ENCODE measurements at regions of chr3 and their contacts with region 1.

Region 1: GRCh38 chr3:30199096-30199759 is 407.2 kb upstream of the TGFBR2 start:
- DNase-seq: peak; percentile 76
- H3K4me3 Mint-ChIP-seq: no peak overlapping the region
- H3K27ac Mint-ChIP-seq: peak overlapping the region; percentile 12
- H3K4me1 Mint-ChIP-seq: peaks cover 32% of the 10 kb centered on the region
- H3K27me3 Mint-ChIP-seq: no peaks in the 10 kb centered on the region
- CTCF ChIP-seq: peak; percentile 60

Region 2: GRCh38 chr3:30042274-30042859 is 156.9 kb before region 1 on chr3:
- CTCF ChIA-PET with region 1: interaction called, 87 read pairs
- POLR2A ChIA-PET with region 1: interaction called, 17 read pairs
- intact Hi-C with region 1: loop called (anchors 1 kb)
- DNase-seq: peak; percentile 80
- H3K4me3 Mint-ChIP-seq: no peak overlapping the region
- H3K27ac Mint-ChIP-seq: no peak overlapping the region
- H3K4me1 Mint-ChIP-seq: no peaks in the 10 kb centered on the region
- H3K27me3 Mint-ChIP-seq: no peaks in the 10 kb centered on the region
- CTCF ChIP-seq: peak; percentile 86

Region 3: DNA sequence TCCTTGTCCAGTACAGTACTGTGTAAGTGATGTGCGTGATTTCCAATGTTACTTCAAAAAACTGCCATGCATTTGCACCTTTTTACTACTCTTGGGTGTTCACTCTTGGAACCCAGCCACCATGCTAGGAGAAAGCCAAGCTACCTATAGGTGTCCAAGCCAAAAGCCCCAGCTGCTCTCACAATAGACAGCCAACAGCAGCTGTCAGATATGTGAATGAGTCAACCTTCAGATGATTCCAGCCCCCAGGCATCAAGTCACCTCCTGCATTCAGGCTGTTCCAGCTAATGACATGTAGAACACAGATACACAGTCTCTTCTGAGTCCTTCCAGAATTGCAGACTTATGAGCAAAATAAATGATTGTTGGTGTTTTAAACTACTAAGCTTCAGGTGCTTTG is 10.5 kb before region 1 on chr3:
- CTCF ChIA-PET with region 1: interaction called, 17 read pairs
- POLR2A ChIA-PET with region 1: interaction called, 8 read pairs
- intact Hi-C with region 1: no loop called
- DNase-seq: peak; percentile 91
- H3K4me3 Mint-ChIP-seq: no peak overlapping the region
- H3K27ac Mint-ChIP-seq: no peak overlapping the region
- H3K4me1 Mint-ChIP-seq: peaks cover 8% of the 10 kb centered on the region
- H3K27me3 Mint-ChIP-seq: no peaks in the 10 kb centered on the region
- CTCF ChIP-seq: no peak

Region 4: DNA sequence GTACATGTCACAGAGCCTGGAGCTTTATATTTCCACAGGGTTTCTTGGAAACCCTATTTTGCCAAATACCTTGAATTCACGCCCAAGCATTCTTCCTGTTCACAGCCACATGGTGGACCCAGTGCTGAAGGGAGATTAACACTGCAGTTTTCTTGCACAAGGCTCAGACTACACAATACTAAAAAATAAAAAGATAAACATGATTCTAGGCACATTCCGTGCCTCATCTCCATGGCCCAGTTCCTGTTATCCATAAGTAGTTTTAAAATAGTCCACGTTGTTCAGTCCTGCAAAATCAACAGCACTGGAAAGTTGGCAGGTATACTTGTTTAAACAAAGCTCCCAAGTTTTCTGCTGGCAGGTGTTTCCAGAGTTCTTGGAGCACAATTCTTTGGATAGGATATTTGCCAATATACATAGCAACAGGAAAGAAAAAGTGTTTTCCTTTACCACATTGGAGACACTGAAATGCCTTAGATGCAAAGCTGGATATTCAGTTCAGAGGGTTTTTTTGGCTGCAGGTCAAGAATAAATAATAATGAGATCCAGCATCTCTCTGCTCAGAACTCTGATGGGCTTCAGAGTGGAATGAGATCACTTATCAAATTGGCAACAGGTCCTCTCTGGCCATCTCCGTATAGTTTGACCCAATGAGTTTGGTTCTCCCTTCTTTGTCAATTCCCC is 319.1 kb after region 1 on chr3:
- CTCF ChIA-PET with region 1: no interaction called
- POLR2A ChIA-PET with region 1: interaction called, 4 read pairs
- intact Hi-C with region 1: loop called (anchors 5 kb)
- DNase-seq: peak; percentile 96
- H3K4me3 Mint-ChIP-seq: peak overlapping the region; percentile 4
- H3K27ac Mint-ChIP-seq: peak overlapping the region; percentile 89
- H3K4me1 Mint-ChIP-seq: peaks cover 46% of the 10 kb centered on the region
- H3K27me3 Mint-ChIP-seq: no peaks in the 10 kb centered on the region
- CTCF ChIP-seq: no peak